Esophagus muscularis mucosa (tissue), 4 donors: ENCODE measurements at regions of chr11 and their contacts with region 1.

Region 1: DNA sequence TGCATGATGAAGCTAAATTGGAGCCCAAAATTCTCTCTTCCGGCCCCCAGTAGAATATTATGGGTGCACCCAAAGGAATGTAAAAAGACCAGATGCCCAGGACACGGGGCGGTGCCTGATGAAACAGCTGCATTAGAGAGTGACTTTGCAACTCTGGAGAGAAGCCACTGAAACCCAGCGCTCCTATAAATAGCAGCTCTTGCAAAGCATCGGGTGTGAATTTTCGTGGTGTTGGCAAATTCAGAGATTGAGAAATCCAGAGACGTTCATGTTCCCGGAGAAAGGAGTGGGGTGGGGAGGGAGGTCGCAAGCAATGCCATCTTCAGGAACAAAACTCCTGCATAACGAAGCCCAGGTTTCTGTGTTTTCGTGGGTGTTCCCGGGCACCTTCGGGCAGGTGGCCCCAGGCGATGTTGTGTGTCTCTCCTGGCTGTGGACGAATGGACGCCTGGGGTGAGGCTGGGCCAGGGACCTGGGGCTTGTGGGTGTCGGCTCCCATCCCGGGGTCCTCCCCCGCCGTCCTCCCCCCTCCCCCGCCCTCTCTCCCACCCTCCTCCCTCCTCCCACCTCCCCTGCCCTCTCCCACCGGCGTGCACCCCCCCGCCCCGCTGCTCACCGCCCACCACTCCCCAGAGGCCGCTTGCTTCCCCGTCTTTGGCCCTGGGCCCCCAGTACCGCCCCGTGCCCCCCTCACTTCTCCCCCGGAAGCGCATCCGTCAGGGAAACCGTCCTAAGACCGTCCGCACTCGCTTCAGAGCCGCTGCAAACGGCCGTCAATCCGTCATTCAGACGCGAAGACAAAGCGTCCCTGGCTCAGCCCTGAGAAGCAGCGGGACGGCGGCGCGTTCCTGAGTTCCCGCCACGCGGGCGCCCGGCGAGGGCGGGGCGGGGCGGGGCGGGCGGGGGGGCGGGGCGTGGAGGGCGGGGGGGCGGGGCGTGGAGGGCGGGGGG is 26.7 kb upstream of the TOLLIP start:
- DNase-seq: peak; percentile 94
- H3K4me3 ChIP-seq: peak overlapping the region; percentile 59 to 71 (median 64)
- H3K27ac ChIP-seq: peak overlapping the region; percentile 82 to 89 (median 88)
- H3K4me1 ChIP-seq: peaks cover 17 to 27% (median 26%) of the 10 kb centered on the region in 4 donors
- H3K27me3 ChIP-seq: no peaks in the 10 kb centered on the region
- CTCF ChIP-seq: no peak
- EP300 ChIP-seq: no peak
- POLR2A ChIP-seq: peak; percentile 34

Region 2: GRCh38 chr11:1298695-1299492 is 37.2 kb before region 1 on chr11:
- intact Hi-C with region 1: loop called (anchors 5 kb)
- DNase-seq: peak; percentile 95
- H3K4me3 ChIP-seq: peak overlapping the region in 2 of 4 donors; percentile 7 to 20
- H3K27ac ChIP-seq: peak overlapping the region; percentile 74 to 95 (median 80)
- H3K4me1 ChIP-seq: peaks cover 47 to 76% (median 63%) of the 10 kb centered on the region in 4 donors
- H3K27me3 ChIP-seq: no peaks in the 10 kb centered on the region
- CTCF ChIP-seq: no peak
- EP300 ChIP-seq: no peak
- POLR2A ChIP-seq: no peak

Region 3: DNA sequence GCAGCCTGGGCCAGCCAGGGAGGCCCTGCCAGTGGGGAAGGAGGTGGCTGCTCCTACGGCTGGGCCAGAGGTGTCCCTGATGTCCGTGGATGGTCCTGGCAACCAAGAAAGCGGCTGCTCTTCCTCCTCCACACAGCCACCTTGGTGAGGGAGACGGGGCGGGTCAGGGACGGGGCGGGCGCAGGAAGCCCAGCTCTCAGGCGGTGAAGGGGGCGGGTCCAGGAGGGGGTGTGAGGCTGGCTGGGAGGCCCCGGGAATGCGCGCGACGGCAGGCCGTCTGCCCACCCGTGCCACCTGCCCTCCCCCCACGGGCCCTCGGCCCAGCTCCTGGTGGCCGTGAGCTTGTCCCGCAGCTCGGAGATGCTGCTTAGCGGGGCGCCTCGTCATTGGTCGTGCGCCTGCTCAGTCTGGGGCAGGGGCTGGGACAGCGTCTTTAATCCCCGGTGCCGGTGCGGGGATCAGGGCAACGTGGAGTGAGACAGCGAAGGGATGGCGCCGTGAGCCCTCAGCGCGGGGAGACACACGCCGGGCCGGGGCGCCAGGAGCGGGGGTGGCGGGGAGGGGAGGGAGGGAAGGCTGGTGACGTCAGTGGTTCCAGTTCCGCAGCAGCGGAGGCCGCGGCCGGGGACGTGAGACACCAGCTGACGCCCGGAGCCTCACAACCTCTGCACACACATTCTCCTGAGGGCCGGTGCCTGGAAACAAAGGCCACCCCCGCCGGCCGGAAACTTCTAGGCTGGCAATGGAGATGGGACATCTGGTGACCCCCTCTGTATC is 46.9 kb after region 1 on chr11:
- intact Hi-C with region 1: loop called (anchors 5 kb)
- DNase-seq: peak; percentile 96
- H3K4me3 ChIP-seq: peak overlapping the region; percentile 61 to 76 (median 64)
- H3K27ac ChIP-seq: peak overlapping the region; percentile 84 to 86 (median 84)
- H3K4me1 ChIP-seq: peaks cover 4 to 15% (median 13%) of the 10 kb centered on the region in 4 donors
- H3K27me3 ChIP-seq: no peaks in the 10 kb centered on the region
- CTCF ChIP-seq: peak in 1 of 3 experiments; percentile 14
- EP300 ChIP-seq: no peak
- POLR2A ChIP-seq: no peak

Region 4: DNA sequence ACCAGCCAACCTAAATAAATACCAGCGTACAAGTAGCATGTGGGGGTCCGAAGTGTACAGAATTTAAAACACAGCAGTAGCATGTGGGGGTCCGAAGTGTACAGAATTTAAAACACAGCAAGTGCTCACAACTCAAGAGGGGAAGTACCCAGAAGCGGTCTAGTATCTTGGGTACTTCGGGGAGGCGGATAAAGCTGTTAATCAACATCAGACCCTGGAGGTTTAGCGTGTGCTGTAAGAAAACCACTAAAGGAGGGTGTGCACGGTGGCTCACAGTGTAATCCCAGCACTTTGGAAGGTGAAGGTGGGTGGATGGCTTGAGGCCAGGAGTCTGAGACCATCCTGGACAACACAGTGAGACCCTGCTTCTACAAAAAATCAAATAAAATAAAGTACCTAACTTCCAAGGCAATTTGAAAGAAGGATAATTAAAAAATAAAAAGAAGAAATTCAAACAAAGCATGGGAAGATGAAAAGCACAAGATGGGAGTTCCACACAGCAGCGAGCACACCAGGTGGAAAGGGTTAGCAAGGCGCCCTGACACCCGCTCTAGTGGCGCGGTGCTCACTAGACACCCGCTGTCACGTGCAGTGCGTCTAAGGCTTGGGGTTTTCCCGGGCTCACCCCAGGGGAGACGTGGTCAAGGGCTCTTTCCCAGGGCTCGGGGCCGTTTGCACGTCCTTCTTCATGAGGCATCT is 185.4 kb after region 1 on chr11:
- intact Hi-C with region 1: no loop called
- DNase-seq: no peak
- H3K4me3 ChIP-seq: no peak overlapping the region
- H3K27ac ChIP-seq: no peak overlapping the region
- H3K4me1 ChIP-seq: peaks cover 51 to 80% (median 65%) of the 10 kb centered on the region in 4 donors
- H3K27me3 ChIP-seq: no peaks in the 10 kb centered on the region
- CTCF ChIP-seq: no peak
- EP300 ChIP-seq: no peak
- POLR2A ChIP-seq: no peak